Left cardiac atrium (tissue), 4 donors: ENCODE measurements at regions of chr3 and their contacts with region 1.

Region 1: GRCh38 chr3:182792901-182793662 is at the start of gene ATP11B:
- DNase-seq: peak; percentile 67
- ATAC-seq: peak; percentile 95
- total RNA-seq, gene ATP11B: 38.5 to 49.4 TPM

Region 2: DNA sequence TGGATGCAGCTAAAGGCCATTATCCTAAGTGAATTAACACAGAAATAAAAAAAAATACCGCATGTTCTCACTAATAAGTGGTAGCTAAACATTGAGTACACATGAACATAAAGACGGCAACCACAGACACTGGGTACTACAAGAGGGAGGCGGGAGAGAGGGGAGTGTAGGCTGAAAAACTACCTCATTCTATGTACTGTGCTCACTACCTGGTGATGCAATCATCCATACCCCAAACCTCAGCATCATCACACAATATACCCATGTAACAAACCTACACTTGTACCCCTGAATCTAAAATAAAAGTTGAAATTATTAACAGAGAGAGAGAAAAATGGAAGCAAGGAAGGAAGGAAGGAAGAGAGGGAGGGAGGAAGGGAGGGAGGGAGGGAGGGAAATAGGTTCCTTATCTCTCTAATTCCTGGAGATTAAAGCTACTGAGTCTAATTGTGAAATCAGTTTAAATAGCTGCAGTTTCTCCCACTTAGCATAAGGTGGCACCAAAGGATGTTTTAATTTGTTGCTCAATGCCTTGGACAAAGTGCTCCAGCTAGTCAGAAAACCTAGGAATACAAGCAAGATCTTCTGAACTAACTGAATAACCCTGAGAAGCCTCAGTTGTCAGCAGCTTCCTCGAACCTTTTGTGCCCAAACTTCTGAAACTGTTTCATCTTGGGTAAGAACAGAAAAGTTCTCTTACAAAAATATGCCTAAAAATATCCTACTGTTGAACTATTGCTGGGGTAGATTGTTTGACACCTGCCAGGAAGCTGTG is 79.2 kb before region 1 on chr3:
- intact Hi-C with region 1: loop called in 1 of 2 experiments (anchors 10 kb)
- DNase-seq: no peak
- ATAC-seq: peak; percentile 90

Region 3: DNA sequence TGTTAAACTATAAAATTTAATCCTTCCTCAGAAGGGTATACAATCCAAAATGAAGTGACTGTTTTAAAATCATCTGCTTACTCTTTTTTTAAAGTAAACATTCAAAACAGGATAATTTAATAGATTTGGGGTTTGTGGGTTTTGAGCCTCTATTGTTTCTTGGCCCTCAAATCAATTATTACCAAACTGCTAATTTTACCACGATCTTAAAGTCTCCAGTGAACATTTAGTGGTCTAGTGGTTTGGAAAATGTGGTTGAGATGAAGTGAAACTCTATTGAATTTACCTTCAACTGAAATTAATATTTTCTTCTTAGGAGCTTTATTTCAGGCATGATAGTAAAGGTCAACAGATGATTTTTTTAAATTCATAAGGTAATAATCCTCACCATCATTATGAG is 10.9 kb before region 1 on chr3:
- intact Hi-C with region 1: no loop called
- DNase-seq: no peak
- ATAC-seq: no peak

Region 4: GRCh38 chr3:182818296-182818978 is 25.4 kb after region 1 on chr3:
- intact Hi-C with region 1: no loop called
- DNase-seq: no peak
- ATAC-seq: no peak

Region 5: DNA sequence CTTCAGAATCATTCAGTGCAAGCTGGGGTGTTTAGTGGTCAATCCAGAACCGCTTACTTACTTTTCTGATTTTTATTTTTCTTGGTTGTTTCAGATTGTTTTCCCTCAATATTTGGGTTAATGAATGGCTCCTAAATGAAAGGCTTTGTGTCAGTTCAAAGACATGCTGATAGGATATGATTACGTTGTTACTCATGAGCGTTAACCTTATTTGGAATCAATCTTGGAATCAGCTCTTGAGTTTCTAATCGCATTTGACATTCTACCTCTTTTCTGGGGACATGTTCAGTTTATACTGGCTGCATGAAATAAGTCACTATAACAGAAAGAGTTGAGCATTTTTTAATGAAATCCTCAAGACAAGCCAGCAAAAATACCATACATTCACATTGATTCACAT is 50.4 kb after region 1 on chr3:
- intact Hi-C with region 1: no loop called
- DNase-seq: no peak
- ATAC-seq: no peak

Region 6: DNA sequence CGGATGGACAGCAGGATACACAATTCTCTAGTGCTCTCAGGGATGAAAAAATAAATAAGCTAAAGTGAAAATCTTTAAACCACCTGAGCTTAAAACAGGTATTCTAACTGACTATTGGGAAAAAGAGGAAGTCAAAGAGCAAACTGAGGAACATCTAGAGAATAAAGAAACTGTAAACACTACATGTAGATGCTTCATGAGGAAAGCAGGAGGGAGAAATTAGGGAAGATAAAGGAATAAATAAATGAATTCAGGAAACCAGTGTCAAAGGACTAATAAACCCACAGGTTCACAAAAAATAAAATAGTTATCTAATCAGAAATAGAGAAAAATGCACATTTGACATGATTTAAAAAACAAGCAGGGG is 306.7 kb after region 1 on chr3:
- intact Hi-C with region 1: loop called in 1 of 2 experiments (anchors 5 kb)
- DNase-seq: no peak
- ATAC-seq: no peak